HEK293 (cell line): ENCODE measurements at regions of chr1 and their contacts with region 1.

Region 1: GRCh38 chr1:153510984-153511410 is 24.8 kb downstream of the S100A6 start:
- H3K4me3 ChIP-seq: no peak overlapping the region
- H3K27ac ChIP-seq: no peak overlapping the region
- H3K4me1 ChIP-seq: no peaks in the 10 kb centered on the region
- CTCF ChIP-seq: peak; percentile 86

Region 2: GRCh38 chr1:152942161-152942560 is 568.8 kb before region 1 on chr1:
- CTCF ChIA-PET with region 1: no interaction called
- POLR2A ChIA-PET with region 1: no interaction called
- H3K4me3 ChIP-seq: no peak overlapping the region
- H3K27ac ChIP-seq: no peak overlapping the region
- H3K4me1 ChIP-seq: no peaks in the 10 kb centered on the region
- CTCF ChIP-seq: no peak

Region 3: DNA sequence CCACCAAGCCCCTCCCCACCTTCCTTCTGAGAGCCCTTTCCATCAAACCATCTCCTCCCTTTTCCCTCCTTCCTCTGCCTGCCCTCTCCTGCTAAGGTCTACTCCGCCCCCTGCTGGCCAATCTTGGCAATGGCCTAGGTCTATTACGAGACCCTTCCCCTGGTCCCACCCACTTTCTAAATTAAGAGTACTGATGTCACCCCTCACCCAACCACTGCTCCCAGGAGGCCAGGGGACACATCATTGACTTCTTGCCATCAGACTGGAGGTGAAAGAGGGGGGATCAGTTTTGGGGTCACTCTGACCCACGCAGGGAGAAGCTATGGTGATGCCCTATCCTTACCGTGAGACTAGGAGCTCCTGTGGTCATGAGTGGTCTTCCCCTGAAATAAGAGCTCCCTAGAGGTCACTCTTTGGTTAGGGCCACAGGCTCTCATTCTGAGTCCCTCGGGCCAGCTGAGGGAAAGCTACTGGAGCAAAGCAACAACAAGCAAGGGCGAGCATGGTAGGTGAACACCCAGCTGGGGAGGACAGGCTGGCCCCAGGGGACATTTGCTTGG is 15.9 kb before region 1 on chr1:
- CTCF ChIA-PET with region 1: interaction called, 37 read pairs
- POLR2A ChIA-PET with region 1: no interaction called
- H3K4me3 ChIP-seq: no peak overlapping the region
- H3K27ac ChIP-seq: no peak overlapping the region
- H3K4me1 ChIP-seq: no peaks in the 10 kb centered on the region; the same call in 1 of the 2 replicates
- CTCF ChIP-seq: peak; percentile 92

Region 4: DNA sequence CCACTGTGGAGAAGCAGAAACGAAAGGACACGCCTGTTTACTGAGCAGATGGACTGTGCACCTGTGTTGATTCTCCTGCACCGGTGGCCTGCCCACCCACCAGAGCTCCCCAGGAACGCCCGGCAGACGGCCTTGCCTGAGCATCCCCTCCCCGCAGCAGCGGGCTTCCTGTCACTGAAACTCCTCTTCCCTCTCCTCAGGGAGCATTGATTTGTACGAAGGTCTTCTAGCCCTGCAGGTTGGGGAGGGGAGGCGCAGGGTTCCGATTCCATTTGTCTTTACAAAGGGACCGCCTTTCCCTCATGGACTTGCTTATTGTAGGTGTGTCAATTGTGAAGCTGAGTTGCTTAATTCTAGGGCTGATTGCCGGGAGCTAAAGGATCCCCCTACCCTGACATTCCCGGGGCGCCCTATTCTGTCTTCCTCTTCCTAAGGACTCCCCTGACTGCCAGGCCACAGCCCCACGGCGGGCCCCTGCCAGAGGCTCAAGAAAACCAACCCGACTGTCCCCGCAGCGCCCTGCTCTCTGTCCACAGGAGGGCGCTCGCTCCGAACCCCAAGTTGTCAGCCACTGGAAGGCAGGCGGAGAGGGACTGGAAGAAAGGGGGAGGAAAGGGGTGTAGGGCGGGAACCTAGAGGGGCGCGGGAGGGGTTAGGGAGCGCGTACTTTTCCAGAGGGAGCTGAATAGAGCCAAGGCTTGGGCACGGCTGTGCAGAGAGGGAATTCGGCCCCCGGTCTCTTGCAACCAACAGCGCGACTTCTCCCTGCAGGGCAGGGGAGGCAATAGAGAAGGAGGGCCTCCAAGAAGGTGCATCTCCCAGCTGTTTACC is 22.0 kb after region 1 on chr1:
- CTCF ChIA-PET with region 1: interaction called, 19 read pairs
- POLR2A ChIA-PET with region 1: no interaction called
- H3K4me3 ChIP-seq: no peak overlapping the region
- H3K27ac ChIP-seq: no peak overlapping the region
- H3K4me1 ChIP-seq: no peaks in the 10 kb centered on the region
- CTCF ChIP-seq: no peak

Region 5: GRCh38 chr1:153566440-153567379 is 55.7 kb after region 1 on chr1:
- CTCF ChIA-PET with region 1: interaction called, 148 read pairs
- POLR2A ChIA-PET with region 1: interaction called, 6 read pairs
- H3K4me3 ChIP-seq: no peak overlapping the region
- H3K27ac ChIP-seq: peak overlapping the region; percentile 77
- H3K4me1 ChIP-seq: peaks cover 7% of the 10 kb centered on the region
- CTCF ChIP-seq: no peak

Region 6: GRCh38 chr1:153572569-153573015 is 61.6 kb after region 1 on chr1:
- CTCF ChIA-PET with region 1: interaction called, 148 read pairs
- POLR2A ChIA-PET with region 1: interaction called, 6 read pairs
- H3K4me3 ChIP-seq: no peak overlapping the region
- H3K27ac ChIP-seq: no peak overlapping the region
- H3K4me1 ChIP-seq: no peaks in the 10 kb centered on the region
- CTCF ChIP-seq: peak; percentile 69; the same call in 1 of the 2 replicates

Region 7: GRCh38 chr1:153749408-153750005 is 238.5 kb after region 1 on chr1:
- CTCF ChIA-PET with region 1: interaction called, 12 read pairs
- POLR2A ChIA-PET with region 1: no interaction called
- H3K4me3 ChIP-seq: no peak overlapping the region
- H3K27ac ChIP-seq: no peak overlapping the region
- H3K4me1 ChIP-seq: no peaks in the 10 kb centered on the region
- CTCF ChIP-seq: peak; percentile 82